Transverse colon (tissue), 4 donors: ENCODE measurements at regions of chr20 and their contacts with region 1.

Region 1: GRCh38 chr20:40753472-40753871 is 64.4 kb upstream of the MAFB start:
- DNase-seq: no peak
- H3K4me3 ChIP-seq: no peak overlapping the region
- H3K27ac ChIP-seq: no peak overlapping the region
- H3K4me1 ChIP-seq: peaks cover 0 to 5% (median 0%) of the 10 kb centered on the region in 4 donors
- H3K27me3 ChIP-seq: no peaks in the 10 kb centered on the region
- CTCF ChIP-seq: no peak
- EP300 ChIP-seq: no peak
- POLR2A ChIP-seq: no peak

Region 2: GRCh38 chr20:40728470-40728869 is 25.0 kb before region 1 on chr20:
- in situ Hi-C with region 1: no loop called
- intact Hi-C with region 1: loop called (anchors 1 kb)
- DNase-seq: no peak
- H3K4me3 ChIP-seq: no peak overlapping the region
- H3K27ac ChIP-seq: no peak overlapping the region
- H3K4me1 ChIP-seq: no peaks in the 10 kb centered on the region
- H3K27me3 ChIP-seq: peaks cover 8% of the 10 kb centered on the region
- CTCF ChIP-seq: no peak
- EP300 ChIP-seq: no peak
- POLR2A ChIP-seq: no peak